Activated T-helper 2 cell treated with anti-CD3 and anti-CD28 coated beads, Interferon-gamma antibody, Interleukin-2, Interleukin-4, amounts not matched to agents 10 μg/mL and 5 μg/mL and 100 μg/mL, durations not matched to agents 14 hours and 24 hours and 36 hours (primary cell): ENCODE measurements at regions of chr5 and their contacts with region 1.

Region 1: DNA sequence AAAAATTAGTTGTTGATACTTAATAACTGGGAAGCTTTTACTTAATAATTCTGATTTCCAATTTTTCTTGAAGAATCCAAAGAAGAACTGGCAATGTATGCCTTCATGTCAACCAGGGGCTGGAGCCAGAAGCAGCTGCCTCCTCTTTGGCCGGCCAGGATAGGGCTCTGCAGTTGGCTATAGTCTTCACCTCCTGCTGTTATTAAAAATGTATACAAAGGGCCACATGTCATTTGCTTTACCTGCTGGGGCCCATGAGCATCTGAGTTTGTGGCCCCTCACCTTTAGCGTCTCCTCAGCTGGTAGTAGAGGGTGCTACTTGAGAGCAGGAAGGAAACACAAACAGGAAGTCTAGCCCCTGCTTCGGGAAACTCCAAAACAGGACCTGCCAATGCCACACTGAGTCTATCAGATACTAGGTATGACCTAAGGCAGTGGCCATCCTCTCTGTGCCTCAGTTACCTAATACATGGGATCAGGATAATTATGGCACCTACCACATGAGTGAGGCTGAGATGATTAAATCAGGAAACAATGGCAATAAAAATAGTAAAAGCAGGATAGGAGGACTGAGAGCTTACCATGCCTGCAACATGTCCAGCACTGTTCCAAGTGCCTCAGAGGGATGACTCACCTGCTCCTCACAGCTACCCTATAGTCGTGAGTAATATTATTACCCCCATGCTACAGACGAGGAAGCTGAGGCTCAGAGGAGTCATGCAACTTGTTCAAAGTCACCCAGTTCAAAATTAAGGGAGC is 21.3 kb downstream of the CCDC69 start:
- DNase-seq: no peak
- H3K4me3 Mint-ChIP-seq: no peak overlapping the region
- H3K27ac Mint-ChIP-seq: peak overlapping the region; percentile 63
- H3K4me1 Mint-ChIP-seq: peaks cover 21% of the 10 kb centered on the region
- H3K27me3 Mint-ChIP-seq: no peaks in the 10 kb centered on the region

Region 2: DNA sequence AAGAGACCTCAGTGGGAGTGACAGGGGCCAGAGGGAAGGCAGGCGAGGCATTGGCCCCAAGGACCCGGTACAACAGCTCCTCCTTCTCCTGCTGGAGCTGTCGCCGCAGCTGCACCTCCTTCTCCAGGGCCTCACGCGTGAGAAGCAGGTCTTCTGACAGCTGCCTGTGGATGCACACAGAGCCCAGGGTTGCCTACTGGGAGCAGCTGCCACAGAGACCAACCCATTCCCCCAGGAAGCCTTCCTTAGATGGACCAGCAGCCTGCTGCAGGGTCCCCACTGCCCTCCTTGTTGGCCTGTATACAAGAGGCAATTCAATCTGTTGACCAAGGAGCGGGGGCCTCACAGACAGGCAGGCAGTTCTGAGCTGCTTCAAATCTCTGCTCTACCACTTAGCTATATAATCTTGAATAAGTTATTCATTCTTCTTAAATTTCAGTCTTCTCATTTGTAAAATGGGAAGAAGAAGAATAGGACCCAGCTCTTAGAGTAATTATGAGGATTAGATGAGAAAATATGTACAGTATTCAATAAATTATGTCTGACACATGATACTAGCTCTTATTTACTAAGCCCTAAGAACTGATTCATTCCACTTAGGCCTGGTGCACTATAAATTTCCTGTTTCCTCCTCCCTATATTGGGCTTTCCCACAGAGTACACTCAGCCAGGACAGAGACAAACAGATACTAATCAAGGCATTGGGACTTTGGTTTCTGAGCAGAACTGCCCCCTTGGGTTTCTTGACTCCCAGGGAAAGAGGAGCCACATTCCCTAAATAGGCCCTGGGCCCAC is 18.9 kb before region 1 on chr5:
- intact Hi-C with region 1: no loop called
- DNase-seq: no peak
- H3K4me3 Mint-ChIP-seq: no peak overlapping the region
- H3K27ac Mint-ChIP-seq: no peak overlapping the region
- H3K4me1 Mint-ChIP-seq: no peaks in the 10 kb centered on the region
- H3K27me3 Mint-ChIP-seq: no peaks in the 10 kb centered on the region

Region 3: DNA sequence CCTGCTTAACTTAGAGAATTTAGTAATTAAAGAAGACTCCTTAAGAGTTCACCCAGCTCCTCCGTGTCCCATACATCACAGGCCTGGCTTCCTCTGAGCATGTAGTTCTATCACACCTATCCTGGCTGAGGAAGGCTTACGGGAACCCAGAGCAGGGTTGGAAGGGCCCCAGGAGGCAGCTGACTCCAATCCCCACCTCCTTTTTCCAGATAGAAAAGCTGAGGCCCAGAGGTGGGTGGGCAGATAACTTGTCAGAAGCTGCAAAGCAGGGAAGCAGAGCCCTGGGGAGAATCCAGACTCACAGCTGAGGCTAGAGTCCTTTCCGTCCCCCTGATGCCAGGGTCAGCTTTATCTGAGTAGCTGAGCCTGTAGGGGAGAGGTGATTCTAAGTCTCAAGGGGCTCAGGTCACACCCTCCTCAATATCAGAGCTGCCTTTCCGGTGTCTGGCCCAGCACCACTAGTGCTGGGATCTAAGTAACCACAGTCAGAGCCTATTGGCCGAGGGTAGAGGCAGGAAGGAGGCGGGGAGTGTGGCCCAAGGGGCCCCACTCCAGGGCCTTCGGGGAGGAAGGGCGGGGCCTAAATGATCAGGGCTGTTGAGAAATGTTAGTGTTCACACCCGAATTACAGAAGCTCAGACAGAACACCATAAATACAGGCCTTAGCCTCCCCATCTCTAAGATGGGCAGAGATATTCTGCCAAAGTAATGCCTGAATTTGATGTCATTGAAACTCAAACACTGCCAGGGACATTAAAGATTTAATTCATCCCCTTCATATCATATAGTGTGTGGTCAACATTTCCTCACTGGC is 11.4 kb after region 1 on chr5:
- intact Hi-C with region 1: loop called (anchors 1 kb)
- DNase-seq: peak; percentile 84
- H3K4me3 Mint-ChIP-seq: peak overlapping the region; percentile 79
- H3K27ac Mint-ChIP-seq: peak overlapping the region; percentile 97
- H3K4me1 Mint-ChIP-seq: peaks cover 75% of the 10 kb centered on the region
- H3K27me3 Mint-ChIP-seq: no peaks in the 10 kb centered on the region

Region 4: GRCh38 chr5:151274670-151275069 is 72.1 kb after region 1 on chr5:
- intact Hi-C with region 1: no loop called
- DNase-seq: no peak
- H3K4me3 Mint-ChIP-seq: no peak overlapping the region
- H3K27ac Mint-ChIP-seq: no peak overlapping the region
- H3K4me1 Mint-ChIP-seq: peaks cover 4% of the 10 kb centered on the region
- H3K27me3 Mint-ChIP-seq: peaks cover 1% of the 10 kb centered on the region

Region 5: DNA sequence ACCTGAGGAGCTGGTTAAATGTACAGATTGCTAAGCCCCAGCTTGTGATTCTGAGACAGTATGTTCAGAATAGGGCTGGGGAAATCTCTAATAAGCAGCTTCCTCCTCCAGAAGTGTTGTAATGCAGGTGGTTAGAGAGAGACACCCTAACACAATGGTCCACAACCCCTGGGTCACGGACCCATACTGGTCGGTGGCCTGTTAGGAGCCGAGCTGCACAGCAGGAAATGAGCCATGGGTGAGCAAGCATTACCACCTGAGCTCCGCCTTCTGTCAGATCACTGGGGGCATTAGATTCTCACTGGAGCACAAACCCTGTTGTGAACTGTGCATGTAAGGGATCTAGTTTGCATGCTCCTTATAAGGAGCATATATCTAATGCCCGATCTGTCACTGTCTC is 306.7 kb after region 1 on chr5:
- intact Hi-C with region 1: no loop called
- DNase-seq: no peak
- H3K4me3 Mint-ChIP-seq: no peak overlapping the region
- H3K27ac Mint-ChIP-seq: no peak overlapping the region
- H3K4me1 Mint-ChIP-seq: no peaks in the 10 kb centered on the region
- H3K27me3 Mint-ChIP-seq: no peaks in the 10 kb centered on the region